ENCODE measurements at regions of chr4 and their contacts with region 1.

Region 1: GRCh38 chr4:142713282-142714030 is 132.6 kb downstream of the INPP4B start:
- DNase-seq: no peak
- H3K4me3 Mint-ChIP-seq: peak overlapping the region; percentile 1
- H3K27ac Mint-ChIP-seq: peak overlapping the region; percentile 74
- H3K4me1 Mint-ChIP-seq: peaks cover 33% of the 10 kb centered on the region
- H3K27me3 Mint-ChIP-seq: no peaks in the 10 kb centered on the region

Region 2: GRCh38 chr4:142396279-142396678 is 317.2 kb before region 1 on chr4:
- intact Hi-C with region 1: loop called (anchors 5 kb)
- DNase-seq: no peak
- H3K4me3 Mint-ChIP-seq: peak overlapping the region; percentile 53
- H3K27ac Mint-ChIP-seq: peak overlapping the region; percentile 89
- H3K4me1 Mint-ChIP-seq: peaks cover 61% of the 10 kb centered on the region
- H3K27me3 Mint-ChIP-seq: no peaks in the 10 kb centered on the region

Region 3: DNA sequence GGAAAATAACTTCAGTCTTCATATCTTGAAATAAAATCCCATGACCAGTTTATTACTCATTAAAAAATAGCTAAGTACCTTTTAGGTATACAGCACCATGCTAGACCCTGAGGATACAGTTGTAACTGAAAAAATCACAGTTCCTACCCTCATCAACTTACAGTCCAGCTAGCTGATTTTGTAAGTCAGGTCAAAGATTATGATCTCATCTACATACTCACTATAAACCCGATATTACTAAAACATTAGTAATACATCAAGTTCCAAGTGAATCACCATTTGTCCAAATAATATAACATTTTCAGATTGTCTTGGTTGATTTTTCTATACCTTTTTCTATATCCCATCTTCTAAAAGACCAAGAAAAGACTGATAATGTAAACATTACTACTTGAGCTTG is 201.3 kb before region 1 on chr4:
- intact Hi-C with region 1: no loop called
- DNase-seq: no peak
- H3K4me3 Mint-ChIP-seq: no peak overlapping the region
- H3K27ac Mint-ChIP-seq: no peak overlapping the region
- H3K4me1 Mint-ChIP-seq: no peaks in the 10 kb centered on the region
- H3K27me3 Mint-ChIP-seq: no peaks in the 10 kb centered on the region

Region 4: GRCh38 chr4:142558851-142559250 is 154.6 kb before region 1 on chr4:
- intact Hi-C with region 1: no loop called
- DNase-seq: no peak
- H3K4me3 Mint-ChIP-seq: no peak overlapping the region
- H3K27ac Mint-ChIP-seq: no peak overlapping the region
- H3K4me1 Mint-ChIP-seq: peaks cover 37% of the 10 kb centered on the region
- H3K27me3 Mint-ChIP-seq: no peaks in the 10 kb centered on the region

Region 5: DNA sequence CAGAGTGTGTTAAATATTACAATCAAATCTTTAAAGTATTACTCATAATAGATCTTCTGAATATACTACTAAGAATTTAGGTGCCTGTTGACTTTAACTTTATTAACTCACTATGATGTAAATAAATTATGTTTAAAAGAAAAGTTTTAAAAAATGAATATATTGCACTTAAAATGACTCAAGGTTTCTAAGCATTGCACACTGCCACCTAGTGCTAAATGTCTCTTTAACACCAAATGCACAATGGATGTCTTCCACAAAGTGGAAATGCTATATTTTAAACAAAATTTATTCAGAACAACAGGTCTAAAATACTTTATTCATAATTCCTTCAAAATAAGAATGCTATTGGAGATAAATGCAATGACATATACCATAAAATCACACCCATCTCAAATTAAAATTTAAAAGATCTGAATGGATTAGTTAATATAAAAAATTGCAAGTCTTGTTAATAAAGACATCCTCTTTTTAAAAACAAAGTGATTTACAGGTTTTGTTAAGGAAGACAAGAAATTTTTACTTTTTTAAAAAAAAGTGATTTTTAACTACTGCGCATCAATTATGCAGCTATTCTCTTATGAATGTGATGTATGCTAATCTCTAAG is 127.2 kb after region 1 on chr4:
- intact Hi-C with region 1: loop called (anchors 5 kb)
- DNase-seq: no peak
- H3K4me3 Mint-ChIP-seq: no peak overlapping the region
- H3K27ac Mint-ChIP-seq: no peak overlapping the region
- H3K4me1 Mint-ChIP-seq: peaks cover 11% of the 10 kb centered on the region
- H3K27me3 Mint-ChIP-seq: peaks cover 7% of the 10 kb centered on the region

Measured in activated T-helper 1 cell treated with anti-CD3 and anti-CD28 coated beads, Interleukin-12 subunit alpha, Interleukin-12 subunit beta, Interleukin-2, Interleukin-4 antibody, amounts not matched to agents 30 ng/mL and 10 ng/mL and 1 ng/mL, durations not matched to agents 14 hours and 24 hours and 36 hours (primary cell).